Esophagus muscularis mucosa (tissue), 4 donors: ENCODE measurements at regions of chr3 and their contacts with region 1.

Region 1: DNA sequence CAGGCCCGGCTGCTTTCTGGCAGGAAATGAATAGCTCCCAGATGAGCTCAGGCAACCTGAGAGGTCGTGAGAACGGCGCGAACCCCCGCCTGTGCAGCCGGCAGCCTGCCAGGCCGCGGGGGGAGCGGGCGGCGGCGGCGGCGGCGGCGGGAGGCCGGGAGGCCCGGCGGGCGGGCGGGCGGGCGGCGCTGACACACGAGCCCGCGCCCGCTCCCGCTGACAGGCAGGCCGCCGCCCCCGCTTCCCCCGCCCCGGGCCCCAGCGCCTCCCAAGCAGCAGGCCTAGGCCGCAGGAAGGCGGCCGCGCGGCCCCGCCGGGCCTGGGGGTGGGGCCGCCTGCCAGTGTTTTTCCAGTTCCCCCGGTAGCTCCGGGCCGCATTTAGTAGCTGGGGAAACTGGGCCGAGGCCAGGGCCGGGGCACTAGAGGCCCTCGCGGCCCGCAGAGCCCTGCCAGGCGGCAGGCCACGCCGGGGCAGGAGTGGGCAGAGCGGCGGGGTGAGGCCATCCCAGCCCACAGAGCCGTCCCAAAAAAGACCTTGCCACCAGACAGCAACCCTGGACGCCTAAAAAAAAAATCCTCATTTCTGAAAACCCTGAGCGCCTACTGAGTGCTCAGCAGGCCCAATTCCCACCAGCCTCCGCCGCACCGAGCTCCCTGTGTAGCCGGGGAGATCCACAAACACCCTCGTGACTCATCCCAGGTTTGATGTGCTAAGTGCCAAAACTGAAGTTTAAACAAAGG is 5.6 kb downstream of the HES1 start:
- DNase-seq: peak; percentile 96
- H3K4me3 ChIP-seq: peak overlapping the region; percentile 46 to 55 (median 50)
- H3K27ac ChIP-seq: peak overlapping the region; percentile 93 to 98 (median 96)
- H3K4me1 ChIP-seq: peaks cover 39 to 78% (median 70%) of the 10 kb centered on the region in 4 donors
- H3K27me3 ChIP-seq: no peaks in the 10 kb centered on the region
- CTCF ChIP-seq: no peak
- EP300 ChIP-seq: peak; percentile 33
- POLR2A ChIP-seq: no peak

Region 2: DNA sequence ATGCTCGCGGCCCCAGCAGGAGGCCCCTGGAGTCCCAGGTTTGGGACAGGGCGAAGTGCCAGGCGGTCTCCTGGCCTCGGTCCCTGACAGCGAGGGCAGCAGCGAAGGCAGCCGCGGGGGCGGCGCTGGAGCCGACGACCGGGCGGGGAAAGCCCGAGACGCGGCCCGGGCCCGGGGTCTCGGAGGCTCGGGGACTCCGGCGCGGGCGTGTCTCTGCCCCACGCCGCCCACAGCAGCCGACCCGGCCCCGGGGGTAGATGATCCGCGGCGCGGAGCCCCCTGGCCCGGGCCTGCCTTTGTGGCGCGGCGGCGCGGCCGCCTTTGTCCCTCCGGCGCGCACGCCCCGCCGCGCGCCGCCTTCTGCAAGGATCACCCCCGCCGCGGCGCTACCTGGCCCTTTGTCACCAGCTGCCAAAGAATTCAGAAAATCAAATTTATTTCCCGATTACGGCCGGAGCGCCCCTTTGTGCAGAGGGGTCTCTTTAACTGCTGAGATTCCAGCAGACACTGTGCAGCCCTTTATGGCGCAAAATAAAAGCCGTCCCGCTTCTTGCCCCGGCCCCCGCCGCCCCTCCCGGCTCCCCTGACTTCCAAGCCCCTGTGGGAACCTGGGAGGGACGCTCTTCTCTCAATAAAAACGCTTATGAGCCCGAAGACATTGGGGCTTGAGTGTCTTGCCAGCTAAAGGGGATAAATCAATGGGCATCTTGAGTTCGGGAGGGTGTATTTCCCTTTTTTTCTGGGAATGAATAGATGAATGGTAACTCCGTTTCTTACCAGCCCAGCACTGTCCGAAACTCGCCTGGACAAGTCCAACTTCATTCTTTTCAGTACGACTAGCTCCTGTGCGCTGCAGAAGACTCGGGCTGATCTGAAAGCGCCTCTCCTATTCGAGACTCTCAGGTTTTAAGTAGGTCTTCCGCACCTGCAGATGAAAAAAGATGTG is 62.7 kb after region 1 on chr3:
- intact Hi-C with region 1: loop called (anchors 10 kb)
- DNase-seq: no peak
- H3K4me3 ChIP-seq: peak overlapping the region; percentile 41 to 43 (median 42)
- H3K27ac ChIP-seq: no peak overlapping the region
- H3K4me1 ChIP-seq: peaks cover 0 to 39% (median 25%) of the 10 kb centered on the region in 4 donors
- H3K27me3 ChIP-seq: peaks cover 0 to 21% (median 9%) of the 10 kb centered on the region in 4 donors
- CTCF ChIP-seq: no peak
- EP300 ChIP-seq: no peak
- POLR2A ChIP-seq: no peak

Region 3: DNA sequence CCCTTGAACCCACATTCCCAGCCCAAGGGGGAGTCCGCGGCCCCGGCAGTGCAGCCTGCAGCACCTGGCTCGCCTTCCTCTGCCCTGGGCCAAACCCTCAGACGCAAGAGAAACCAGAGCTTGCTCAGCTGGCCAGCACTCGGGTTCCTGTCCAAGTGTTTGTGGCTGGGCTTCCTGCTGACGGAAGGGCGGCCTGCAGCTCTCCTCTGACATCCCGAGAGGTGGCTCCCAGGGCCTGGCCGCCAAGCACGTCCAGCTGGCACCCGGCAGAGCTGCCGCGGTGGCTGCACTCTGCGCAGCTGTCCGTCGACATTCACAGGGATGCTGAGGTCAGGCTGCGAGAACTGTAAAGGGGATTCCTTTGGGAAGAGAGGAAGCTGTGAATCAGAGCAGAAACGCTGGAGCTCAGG is 123.9 kb after region 1 on chr3:
- intact Hi-C with region 1: loop called (anchors 5 kb)
- DNase-seq: no peak
- H3K4me3 ChIP-seq: peak overlapping the region in 2 of 4 donors; percentile 10 to 18
- H3K27ac ChIP-seq: peak overlapping the region; percentile 56 to 80 (median 64)
- H3K4me1 ChIP-seq: peaks cover 48 to 58% (median 56%) of the 10 kb centered on the region in 4 donors
- H3K27me3 ChIP-seq: no peaks in the 10 kb centered on the region
- CTCF ChIP-seq: no peak
- EP300 ChIP-seq: no peak
- POLR2A ChIP-seq: no peak